ACHN (cell line): ENCODE measurements at regions of chr7 and their contacts with region 1.

Region 1: DNA sequence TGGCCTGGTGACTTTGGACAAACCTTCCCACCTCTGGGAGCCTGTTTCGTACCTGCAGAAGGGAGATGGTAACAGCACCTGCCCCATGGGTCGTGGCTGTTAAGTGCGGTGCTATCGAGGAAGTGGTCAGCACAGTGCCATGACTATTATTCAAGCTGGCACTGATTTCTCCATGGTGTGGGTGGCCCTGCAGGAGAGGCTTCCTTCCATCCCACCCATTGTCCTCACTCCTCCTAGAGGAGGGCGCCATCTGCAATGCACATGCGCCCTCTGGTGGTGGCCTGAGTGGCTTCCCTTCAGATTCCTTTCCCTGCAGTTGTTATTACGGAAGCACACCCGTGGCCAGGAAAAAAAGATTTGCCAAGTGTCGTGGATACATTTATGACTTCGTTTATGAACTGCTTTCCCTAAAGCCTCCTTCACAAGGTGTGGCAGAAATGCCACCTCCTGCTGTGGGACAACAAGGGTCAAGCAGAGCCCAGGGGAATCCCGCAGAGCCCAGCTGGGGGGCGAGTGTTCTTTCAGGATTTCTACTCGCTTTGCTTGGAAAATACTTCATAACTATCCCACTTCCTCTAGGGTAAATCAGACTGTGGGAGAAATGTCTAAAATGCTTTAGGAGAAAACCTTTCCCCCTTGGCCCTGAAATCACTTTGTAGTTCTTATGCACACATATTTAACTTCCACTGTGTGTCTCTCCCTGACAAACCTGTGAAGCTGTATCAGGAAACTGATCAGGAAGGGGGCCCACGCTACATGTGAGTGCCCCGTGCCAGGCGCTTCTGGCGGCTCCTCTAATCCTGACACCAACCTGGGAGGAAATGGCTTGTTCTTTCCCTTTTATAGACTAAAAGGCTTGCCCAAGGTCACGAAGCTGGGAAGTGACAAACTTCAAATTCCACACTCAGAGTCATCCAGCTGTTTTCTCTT is 98.0 kb upstream of the ANLN start:
- DNase-seq: peak; percentile 91

Region 2: GRCh38 chr7:35985126-35985754 is 306.4 kb before region 1 on chr7:
- in situ Hi-C with region 1: loop called (anchors 10 kb)
- DNase-seq: peak; percentile 83

Region 3: DNA sequence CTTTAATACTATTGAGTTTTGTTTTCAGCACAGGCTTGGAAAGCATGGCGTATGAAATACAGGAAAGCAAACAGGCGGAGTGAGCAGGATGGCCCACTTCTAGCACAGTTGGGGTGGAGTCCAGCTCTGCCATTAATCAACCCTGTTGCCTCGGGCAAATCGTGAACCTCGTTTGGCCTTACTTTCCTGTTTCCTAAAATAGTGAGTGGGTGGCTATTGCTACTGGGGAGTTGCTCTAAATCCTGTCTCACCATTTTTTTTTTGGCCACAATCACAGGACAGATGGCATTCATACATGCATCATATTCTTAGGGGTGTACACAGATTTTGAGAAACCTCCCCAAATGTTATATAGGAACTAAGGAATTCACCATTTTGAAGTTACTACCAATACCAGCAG is 255.8 kb after region 1 on chr7:
- in situ Hi-C with region 1: no loop called
- DNase-seq: no peak

Region 4: DNA sequence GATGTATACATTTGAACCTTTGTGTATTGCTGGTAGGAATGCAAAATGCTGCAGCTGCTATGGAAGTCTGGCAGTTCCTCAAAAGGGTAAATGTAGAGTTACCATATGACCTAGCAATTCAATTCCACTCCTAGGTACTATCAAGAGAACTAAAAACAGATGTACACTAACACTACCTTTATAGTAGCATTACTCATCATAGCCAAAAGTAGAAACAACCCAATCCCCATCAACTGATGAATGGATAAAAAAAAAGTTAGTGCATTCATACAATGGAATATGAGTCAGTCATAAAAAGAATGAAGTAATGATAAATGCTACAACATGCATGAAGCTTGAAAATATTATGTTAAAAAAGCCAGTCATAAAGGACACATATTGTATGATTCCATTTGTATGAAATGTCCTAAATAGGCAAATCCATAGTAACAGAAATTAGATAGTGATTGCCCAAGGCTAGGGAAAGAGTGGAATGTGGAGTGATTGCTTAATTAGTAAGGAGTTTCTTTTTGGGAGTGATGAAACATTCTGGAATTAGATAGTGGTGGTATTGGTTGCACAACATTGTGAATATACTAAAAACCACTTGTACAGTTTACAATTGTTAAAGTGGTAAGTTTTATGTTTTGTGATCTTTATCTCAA is 529.0 kb after region 1 on chr7:
- in situ Hi-C with region 1: no loop called
- DNase-seq: no peak